HepG2 (cell line): ENCODE measurements at regions of chr11 and their contacts with region 1.

Region 1: DNA sequence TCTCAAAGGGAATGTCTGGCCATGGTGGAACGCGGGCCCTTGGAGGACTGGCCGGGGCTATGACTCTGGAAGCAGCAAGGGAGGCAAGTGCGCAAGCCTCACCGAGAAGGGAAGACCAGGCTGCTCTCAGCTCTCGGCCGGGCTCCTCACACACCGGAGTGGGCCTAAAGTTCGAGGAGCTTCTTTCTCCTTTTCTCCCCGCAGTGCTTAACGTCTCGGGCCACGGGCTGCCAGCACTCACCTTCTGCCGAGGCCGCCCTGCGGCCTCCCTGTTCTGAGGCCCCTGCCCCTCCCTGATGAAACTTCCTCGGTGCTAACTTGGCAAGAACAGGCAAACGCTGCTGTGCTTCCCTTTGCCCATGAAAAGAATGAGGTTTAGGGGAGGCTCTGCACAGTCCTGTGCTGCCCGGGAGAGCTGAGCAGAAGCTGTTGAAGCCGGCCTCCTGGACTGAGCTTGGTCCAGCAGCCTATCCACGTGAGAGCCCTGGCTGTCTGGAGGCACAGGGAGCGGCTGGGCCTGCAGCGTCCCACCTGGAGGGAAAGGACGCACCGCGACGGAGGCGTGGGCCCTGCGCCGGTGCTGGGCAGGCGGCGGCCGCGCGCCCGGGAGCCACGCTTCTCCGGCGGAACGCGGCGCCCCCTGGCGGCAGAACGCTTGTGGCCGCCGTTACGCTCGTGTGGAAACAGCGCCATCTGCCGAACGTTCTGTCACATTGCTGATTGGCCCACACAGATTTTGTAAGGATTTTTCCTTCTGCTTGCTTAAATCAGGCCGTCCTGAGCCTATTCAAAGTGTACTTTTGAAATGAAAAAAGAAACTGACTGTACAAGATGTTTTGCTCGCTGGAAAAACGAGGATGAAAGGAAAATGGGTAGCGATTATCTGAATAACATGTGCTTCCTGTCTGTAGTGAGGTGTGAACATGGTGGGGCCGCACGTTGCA is 65.0 kb upstream of the TMEM45B start:
- DNase-seq: peak; percentile 56
- ATAC-seq: peak; percentile 98
- H3K4me3 ChIP-seq: peak overlapping the region; percentile 11 to 62 (median 34); a peak in 2 of 6 replicates
- H3K27ac ChIP-seq: no peak overlapping the region
- H3K4me1 ChIP-seq: peaks cover 6% of the 10 kb centered on the region
- H3K27me3 ChIP-seq: peaks cover 2 to 25% of the 10 kb centered on the region in 2 experiments; a peak in 3 of 5 replicates
- CTCF ChIP-seq: peak; percentile 96
- EP300 ChIP-seq: no peak
- POLR2A ChIP-seq: no peak
- RAD21 ChIP-seq: peak; percentile 97

Region 2: DNA sequence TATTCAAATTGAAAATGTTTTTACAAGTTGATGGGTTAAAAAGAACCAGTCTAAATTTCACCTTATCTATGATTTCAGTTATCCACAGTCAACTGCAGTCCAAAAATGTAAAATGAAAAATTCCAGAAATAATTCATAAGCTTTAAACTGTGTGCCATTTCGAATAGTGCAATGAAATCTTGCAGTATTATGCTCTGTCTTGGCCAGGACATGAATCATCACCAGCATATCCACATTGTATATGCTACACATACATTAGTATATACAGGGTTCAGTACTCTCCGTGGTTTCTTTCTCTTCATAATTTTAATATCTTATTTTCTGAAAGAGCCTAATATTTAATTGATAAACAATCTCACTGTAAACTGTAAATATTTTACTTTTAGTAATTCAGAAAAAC is 604.4 kb before region 1 on chr11:
- CTCF ChIA-PET with region 1: no interaction called
- POLR2A ChIA-PET with region 1: no interaction called
- in situ Hi-C with region 1: no loop called
- intact Hi-C with region 1: no loop called
- DNase-seq: no peak
- ATAC-seq: no peak
- H3K4me3 ChIP-seq: no peak overlapping the region
- H3K27ac ChIP-seq: no peak overlapping the region
- H3K4me1 ChIP-seq: peaks cover 37% of the 10 kb centered on the region
- H3K27me3 ChIP-seq: no peaks in the 10 kb centered on the region
- CTCF ChIP-seq: no peak
- EP300 ChIP-seq: no peak
- POLR2A ChIP-seq: no peak
- RAD21 ChIP-seq: no peak

Region 3: DNA sequence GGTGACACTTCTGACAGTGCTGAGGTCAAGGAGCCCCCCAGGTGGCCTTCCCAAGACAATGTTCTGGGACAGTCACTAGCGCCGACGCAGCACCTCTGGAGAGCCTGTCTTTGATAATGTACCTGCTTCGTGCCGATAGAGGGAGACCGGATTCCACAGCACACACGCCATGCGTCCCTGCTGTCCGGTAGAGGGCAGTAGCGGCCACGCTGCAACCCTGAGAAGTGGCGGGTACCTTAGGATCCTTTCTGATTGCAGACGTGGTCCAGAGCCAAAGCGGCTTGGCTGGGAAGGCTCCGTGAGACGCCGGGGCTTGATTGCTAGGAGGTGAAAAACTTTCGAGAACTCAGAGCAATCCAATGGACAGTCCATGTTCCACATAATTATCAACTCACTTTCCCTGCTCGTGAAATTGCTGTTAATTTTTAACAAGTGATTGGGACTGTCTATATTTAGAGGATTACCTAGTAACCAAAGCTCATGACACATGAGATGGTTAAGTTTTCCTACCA is 386.4 kb before region 1 on chr11:
- CTCF ChIA-PET with region 1: interaction called, 122 read pairs
- POLR2A ChIA-PET with region 1: no interaction called
- in situ Hi-C with region 1: loop called (anchors 5 kb)
- intact Hi-C with region 1: loop called (anchors 1 kb)
- DNase-seq: peak; percentile 80
- ATAC-seq: peak; percentile 100
- H3K4me3 ChIP-seq: peak overlapping the region in 2 of 3 experiments; percentile 3 to 46; a peak in 2 of 6 replicates
- H3K27ac ChIP-seq: no peak overlapping the region
- H3K4me1 ChIP-seq: peaks cover 12% of the 10 kb centered on the region
- H3K27me3 ChIP-seq: peaks cover 0 to 22% of the 10 kb centered on the region in 2 experiments; a peak in 2 of 5 replicates
- CTCF ChIP-seq: peak; percentile 100
- EP300 ChIP-seq: no peak
- POLR2A ChIP-seq: no peak
- RAD21 ChIP-seq: peak; percentile 95

Region 4: GRCh38 chr11:129375751-129376657 is 374.6 kb before region 1 on chr11 and contains the start of gene BARX2:
- CTCF ChIA-PET with region 1: interaction called, 8 read pairs
- POLR2A ChIA-PET with region 1: no interaction called
- in situ Hi-C with region 1: no loop called
- intact Hi-C with region 1: loop called (anchors 5 kb)
- DNase-seq: peak; percentile 33
- ATAC-seq: peak; percentile 88
- H3K4me3 ChIP-seq: peak within 1 kb of the TSS in 2 of 3 experiments; percentile 37 to 48; a peak in 2 of 6 replicates
- H3K27ac ChIP-seq: no peak within 1 kb of the TSS
- H3K4me1 ChIP-seq: no peaks in the 10 kb centered on the region
- H3K27me3 ChIP-seq: peaks cover 10 to 82% of the 10 kb centered on the region in 2 experiments
- CTCF ChIP-seq: peak; percentile 83
- EP300 ChIP-seq: no peak
- POLR2A ChIP-seq: no peak
- RAD21 ChIP-seq: peak; percentile 64
- total RNA-seq, gene BARX2: not detected in 2 replicates

Region 5: DNA sequence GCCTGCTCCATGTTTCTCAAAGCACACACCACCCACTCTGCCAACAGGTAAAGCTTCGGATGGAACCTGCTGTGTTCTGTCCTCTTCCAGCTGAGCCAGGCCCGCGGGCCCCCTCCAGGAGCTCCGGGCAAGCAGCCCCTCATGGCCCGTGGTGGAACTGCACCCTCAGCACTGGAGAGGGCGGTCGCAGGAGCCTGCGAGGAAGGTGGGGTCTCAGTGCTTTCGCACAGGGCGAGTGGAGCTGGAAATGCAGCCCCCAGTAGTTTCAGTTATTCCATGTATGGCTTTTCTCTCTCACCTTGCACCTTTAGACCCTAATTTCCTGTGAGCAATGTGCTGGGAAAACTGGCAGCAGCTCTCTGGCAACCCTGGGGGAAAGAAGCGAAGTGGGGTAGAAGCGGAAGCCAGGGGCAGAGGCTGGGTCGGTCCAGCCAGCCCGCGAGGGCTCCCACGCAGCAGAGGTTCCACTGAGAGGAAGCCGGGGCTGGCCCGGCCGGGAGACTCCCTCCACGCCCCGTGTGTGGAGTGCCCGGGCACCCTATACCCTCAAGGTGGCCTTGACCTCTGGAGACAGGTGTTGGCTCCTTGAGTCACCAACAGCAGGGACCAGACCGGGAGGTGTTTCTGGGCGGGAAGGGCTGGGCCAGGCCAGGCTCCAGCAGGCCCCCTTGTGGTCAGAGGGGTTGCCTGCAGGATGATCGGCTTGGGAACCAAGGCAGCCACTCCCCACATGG is 54.9 kb before region 1 on chr11:
- CTCF ChIA-PET with region 1: interaction called, 10 read pairs
- POLR2A ChIA-PET with region 1: no interaction called
- in situ Hi-C with region 1: no loop called
- intact Hi-C with region 1: loop called (anchors 2 kb)
- DNase-seq: peak; percentile 46
- ATAC-seq: peak; percentile 97
- H3K4me3 ChIP-seq: peak overlapping the region; percentile 11 to 69 (median 46)
- H3K27ac ChIP-seq: no peak overlapping the region
- H3K4me1 ChIP-seq: peaks cover 5% of the 10 kb centered on the region; the same call in 1 of the 2 replicates
- H3K27me3 ChIP-seq: peaks cover 2 to 45% of the 10 kb centered on the region in 2 experiments; a peak in 4 of 5 replicates
- CTCF ChIP-seq: peak; percentile 88
- EP300 ChIP-seq: no peak
- POLR2A ChIP-seq: no peak
- RAD21 ChIP-seq: 0 out of 2 replicates have a peak, but pooled peaks have one; percentile 41